ENCODE measurements at regions of chr12 and their contacts with region 1.

Region 1: GRCh38 chr12:31659087-31659933 is at the start of gene ETFBKMT:
- DNase-seq: peak; percentile 86 to 91 (median 90)
- ATAC-seq: peak; percentile 88 to 96 (median 96)
- H3K4me3 ChIP-seq: peak within 1 kb of the TSS; percentile 28 to 92 (median 70)
- H3K27ac ChIP-seq: peak within 1 kb of the TSS; percentile 87 to 99 (median 93)
- H3K4me1 ChIP-seq: peaks cover 0 to 12% (median 6%) of the 10 kb centered on the region in 12 donors
- H3K27me3 ChIP-seq: no peaks in the 10 kb centered on the region
- CTCF ChIP-seq: peak in 11 of 12 donors; percentile 33 to 80 (median 46)
- POLR2A ChIP-seq: peak in 1 of 2 donors; percentile 32
- total RNA-seq, gene ETFBKMT: 3.1 to 7.4 (median 6.1) TPM

Region 2: DNA sequence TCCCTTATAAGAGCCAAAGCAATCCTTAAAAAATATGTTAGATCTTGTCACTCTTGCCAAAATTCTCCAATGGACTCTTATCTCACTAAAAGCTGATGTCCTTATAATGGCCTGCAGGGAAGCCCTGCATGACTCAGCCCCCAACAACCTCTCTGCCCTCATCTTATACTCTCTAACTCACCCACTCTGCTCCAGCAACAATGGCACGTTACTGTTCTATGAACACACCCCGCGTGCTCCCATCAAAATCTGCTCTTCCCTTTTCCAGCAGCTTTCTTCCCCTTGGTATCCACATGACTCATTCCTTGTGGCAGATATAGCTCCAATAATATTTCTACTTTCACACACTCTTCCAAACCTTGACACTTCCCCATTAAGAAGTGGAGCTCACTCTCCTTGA is 176.5 kb before region 1 on chr12:
- intact Hi-C with region 1: no loop called
- DNase-seq: no peak
- ATAC-seq: peak in 1 of 4 donors; percentile 45
- H3K4me3 ChIP-seq: no peak overlapping the region
- H3K27ac ChIP-seq: no peak overlapping the region
- H3K4me1 ChIP-seq: peaks cover 0 to 21% (median 4%) of the 10 kb centered on the region in 12 donors
- H3K27me3 ChIP-seq: no peaks in the 10 kb centered on the region
- CTCF ChIP-seq: no peak
- POLR2A ChIP-seq: no peak

Region 3: GRCh38 chr12:31959161-31959700 is 299.9 kb after region 1 on chr12 and contains the start of gene RESF1:
- intact Hi-C with region 1: loop called in 5 of 10 experiments (anchors 1 to 10 kb)
- DNase-seq: peak; percentile 91 to 95 (median 93)
- ATAC-seq: peak; percentile 94 to 99 (median 98)
- H3K4me3 ChIP-seq: peak within 1 kb of the TSS; percentile 58 to 92 (median 74)
- H3K27ac ChIP-seq: peak within 1 kb of the TSS; percentile 90 to 97 (median 94)
- H3K4me1 ChIP-seq: peaks cover 0 to 47% (median 27%) of the 10 kb centered on the region in 12 donors
- H3K27me3 ChIP-seq: no peaks in the 10 kb centered on the region
- CTCF ChIP-seq: peak in 2 of 12 donors; percentile 7
- POLR2A ChIP-seq: peak in 1 of 2 donors; percentile 85
- total RNA-seq, gene RESF1: 13.7 to 42.8 (median 22.8) TPM

Region 4: GRCh38 chr12:32069071-32069470 is 409.8 kb after region 1 on chr12:
- intact Hi-C with region 1: loop called in 3 of 10 experiments (anchors 5 to 10 kb)
- DNase-seq: no peak
- ATAC-seq: no peak
- H3K4me3 ChIP-seq: no peak overlapping the region
- H3K27ac ChIP-seq: no peak overlapping the region
- H3K4me1 ChIP-seq: no peaks in the 10 kb centered on the region
- H3K27me3 ChIP-seq: no peaks in the 10 kb centered on the region
- CTCF ChIP-seq: no peak
- POLR2A ChIP-seq: no peak

Region 5: GRCh38 chr12:32302218-32303173 is 643.2 kb after region 1 on chr12:
- intact Hi-C with region 1: loop called in 7 of 10 experiments (anchors 5 to 10 kb)
- DNase-seq: peak in 1 of 5 donors; percentile 28
- ATAC-seq: peak in 3 of 4 donors; percentile 62 to 73 (median 73)
- H3K4me3 ChIP-seq: no peak overlapping the region
- H3K27ac ChIP-seq: no peak overlapping the region
- H3K4me1 ChIP-seq: peaks cover 0 to 4% (median 0%) of the 10 kb centered on the region in 12 donors
- H3K27me3 ChIP-seq: no peaks in the 10 kb centered on the region
- CTCF ChIP-seq: peak; percentile 21 to 63 (median 39)
- POLR2A ChIP-seq: no peak

Region 6: GRCh38 chr12:32679091-32679919 is 1020.0 kb after region 1 on chr12 and contains the start of gene DNM1L:
- intact Hi-C with region 1: loop called in 5 of 10 experiments (anchors 10 kb)
- DNase-seq: peak; percentile 94 to 97 (median 96)
- ATAC-seq: peak; percentile 98 to 99 (median 98)
- H3K4me3 ChIP-seq: peak within 1 kb of the TSS; percentile 67 to 100 (median 83)
- H3K27ac ChIP-seq: peak within 1 kb of the TSS; percentile 63 to 97 (median 93)
- H3K4me1 ChIP-seq: peaks cover 0 to 24% (median 10%) of the 10 kb centered on the region in 12 donors
- H3K27me3 ChIP-seq: no peaks in the 10 kb centered on the region
- CTCF ChIP-seq: peak in 6 of 12 donors; percentile 9 to 38 (median 16)
- POLR2A ChIP-seq: peak in 1 of 2 donors; percentile 84
- total RNA-seq, gene DNM1L: 41.2 to 71.1 (median 57.0) TPM